Mammary epithelial cell (primary cell): ENCODE measurements at regions of chr1 and their contacts with region 1.

Region 1: GRCh38 chr1:228131766-228132165 is 8.3 kb upstream of the GUK1 start:
- DNase-seq: no peak
- H3K4me3 ChIP-seq: no peak overlapping the region
- H3K27ac ChIP-seq: peak overlapping the region; percentile 9
- H3K4me1 ChIP-seq: peaks cover 11% of the 10 kb centered on the region
- H3K27me3 ChIP-seq: no peaks in the 10 kb centered on the region
- CTCF ChIP-seq: no peak

Region 2: DNA sequence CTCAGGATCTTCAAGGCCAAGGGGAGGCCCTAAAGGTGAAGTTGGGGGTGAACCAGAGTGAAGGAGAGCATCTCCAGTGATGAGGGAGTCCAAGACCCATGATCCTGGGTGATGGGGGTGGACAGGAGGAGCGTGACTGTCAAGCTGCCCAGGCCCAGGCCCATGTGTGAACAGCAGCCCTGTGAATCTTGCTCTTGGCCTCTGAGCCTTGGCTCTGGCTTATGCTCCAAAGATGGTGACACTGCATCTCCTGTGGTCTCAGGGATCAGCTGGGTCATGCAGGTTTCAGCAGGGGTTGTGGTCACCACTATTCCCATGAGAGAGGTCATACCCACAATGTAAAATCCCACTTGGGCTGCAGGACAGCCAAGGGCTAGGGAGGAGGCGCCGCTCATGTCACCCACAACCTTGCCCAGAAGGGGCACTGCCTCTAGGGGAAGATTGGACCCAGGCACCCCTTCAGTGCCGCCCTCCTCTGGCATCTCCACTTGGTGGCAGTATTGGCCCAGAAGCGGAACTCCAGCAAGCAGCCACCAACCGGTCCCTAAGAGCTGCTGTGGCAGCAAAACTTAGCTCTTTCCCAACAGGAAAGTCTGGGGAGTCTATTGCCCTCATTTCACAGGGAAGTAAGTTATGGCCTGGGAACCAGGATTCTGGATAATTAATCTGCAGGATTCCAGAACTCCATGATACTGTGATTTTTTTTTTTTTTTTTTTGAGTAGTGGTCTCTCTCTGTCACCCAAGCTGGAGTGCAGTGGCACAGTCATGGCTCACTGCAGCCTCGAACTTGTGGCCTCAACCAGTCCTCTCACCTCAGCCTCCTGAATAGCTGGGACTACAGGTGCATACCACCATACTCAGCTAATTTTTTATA is 132.5 kb before region 1 on chr1:
- CTCF ChIA-PET with region 1: interaction called, 6 read pairs
- dilution Hi-C with region 1: no loop called
- in situ Hi-C with region 1: no loop called
- intact Hi-C with region 1: loop called (anchors 1 kb)
- DNase-seq: peak; percentile 68
- H3K4me3 ChIP-seq: no peak overlapping the region
- H3K27ac ChIP-seq: no peak overlapping the region
- H3K4me1 ChIP-seq: no peaks in the 10 kb centered on the region
- H3K27me3 ChIP-seq: no peaks in the 10 kb centered on the region
- CTCF ChIP-seq: peak; percentile 97 to 98

Region 3: DNA sequence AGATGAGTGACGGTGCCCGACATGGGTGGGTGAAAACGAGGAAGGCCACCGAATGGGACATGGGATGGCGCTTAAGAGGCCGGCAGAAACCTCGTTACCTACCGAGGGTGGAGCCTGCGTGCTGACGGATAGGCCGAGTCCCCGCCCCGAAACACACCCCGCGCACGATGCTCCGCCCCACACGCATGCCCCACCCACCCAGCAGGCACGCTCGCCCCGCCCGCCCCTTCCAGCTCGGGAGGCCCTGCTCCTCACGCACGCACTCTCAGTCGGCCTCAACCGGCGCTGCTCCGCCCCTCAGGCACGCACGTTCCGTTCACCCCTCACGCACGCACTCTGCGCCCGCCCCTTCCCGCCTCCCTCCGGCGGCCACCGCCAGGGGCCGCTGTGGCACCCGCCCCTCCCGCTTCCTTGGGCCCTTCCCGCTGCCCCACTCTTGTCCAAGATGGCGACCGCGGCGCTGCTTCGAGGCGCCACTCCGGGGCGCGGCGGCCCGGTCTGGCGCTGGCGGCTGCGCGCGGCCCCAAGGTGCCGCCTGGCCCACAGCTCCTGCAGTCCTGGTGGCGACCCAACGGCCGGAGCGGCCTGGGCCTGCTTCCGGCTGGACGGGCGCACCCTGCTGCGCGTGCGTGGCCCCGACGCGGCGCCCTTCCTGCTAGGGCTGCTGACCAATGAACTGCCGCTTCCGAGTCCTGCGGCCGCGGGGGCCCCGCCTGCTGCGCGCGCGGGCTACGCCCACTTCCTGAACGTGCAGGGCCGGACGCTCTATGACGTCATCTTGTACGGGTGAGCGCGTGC is 33.8 kb after region 1 on chr1 and contains the start of gene IBA57:
- CTCF ChIA-PET with region 1: interaction called, 3 read pairs
- dilution Hi-C with region 1: no loop called
- in situ Hi-C with region 1: no loop called
- intact Hi-C with region 1: loop called (anchors 1 kb)
- DNase-seq: peak; percentile 98
- H3K4me3 ChIP-seq: peak within 1 kb of the TSS; percentile 59 to 73 (median 68)
- H3K27ac ChIP-seq: peak within 1 kb of the TSS; percentile 94
- H3K4me1 ChIP-seq: peaks cover 38% of the 10 kb centered on the region
- H3K27me3 ChIP-seq: no peaks in the 10 kb centered on the region
- CTCF ChIP-seq: peak; percentile 72 to 87
- total RNA-seq, gene IBA57: 7.0 to 8.0 TPM

Region 4: GRCh38 chr1:228212966-228213844 is 81.4 kb after region 1 on chr1:
- CTCF ChIA-PET with region 1: no interaction called
- dilution Hi-C with region 1: loop called (anchors 5 kb)
- in situ Hi-C with region 1: no loop called
- intact Hi-C with region 1: loop called (anchors 5 kb)
- DNase-seq: peak; percentile 83
- H3K4me3 ChIP-seq: peak overlapping the region; percentile 32 to 80 (median 57)
- H3K27ac ChIP-seq: no peak overlapping the region
- H3K4me1 ChIP-seq: peaks cover 9% of the 10 kb centered on the region
- H3K27me3 ChIP-seq: no peaks in the 10 kb centered on the region
- CTCF ChIP-seq: peak; percentile 34 to 73

Region 5: GRCh38 chr1:228378090-228378872 is 246.5 kb after region 1 on chr1:
- CTCF ChIA-PET with region 1: no interaction called
- dilution Hi-C with region 1: no loop called
- in situ Hi-C with region 1: no loop called
- intact Hi-C with region 1: loop called (anchors 1 kb)
- DNase-seq: peak; percentile 42
- H3K4me3 ChIP-seq: peak overlapping the region; percentile 49 to 60 (median 59)
- H3K27ac ChIP-seq: no peak overlapping the region
- H3K4me1 ChIP-seq: peaks cover 16% of the 10 kb centered on the region
- H3K27me3 ChIP-seq: no peaks in the 10 kb centered on the region
- CTCF ChIP-seq: peak; percentile 31 to 51

Region 6: GRCh38 chr1:228405987-228406265 is 274.2 kb after region 1 on chr1:
- CTCF ChIA-PET with region 1: no interaction called
- dilution Hi-C with region 1: no loop called
- in situ Hi-C with region 1: no loop called
- intact Hi-C with region 1: loop called (anchors 5 kb)
- DNase-seq: no peak
- H3K4me3 ChIP-seq: peak overlapping the region; percentile 69 to 94 (median 76)
- H3K27ac ChIP-seq: peak overlapping the region; percentile 16
- H3K4me1 ChIP-seq: peaks cover 28% of the 10 kb centered on the region
- H3K27me3 ChIP-seq: no peaks in the 10 kb centered on the region
- CTCF ChIP-seq: no peak

Region 7: DNA sequence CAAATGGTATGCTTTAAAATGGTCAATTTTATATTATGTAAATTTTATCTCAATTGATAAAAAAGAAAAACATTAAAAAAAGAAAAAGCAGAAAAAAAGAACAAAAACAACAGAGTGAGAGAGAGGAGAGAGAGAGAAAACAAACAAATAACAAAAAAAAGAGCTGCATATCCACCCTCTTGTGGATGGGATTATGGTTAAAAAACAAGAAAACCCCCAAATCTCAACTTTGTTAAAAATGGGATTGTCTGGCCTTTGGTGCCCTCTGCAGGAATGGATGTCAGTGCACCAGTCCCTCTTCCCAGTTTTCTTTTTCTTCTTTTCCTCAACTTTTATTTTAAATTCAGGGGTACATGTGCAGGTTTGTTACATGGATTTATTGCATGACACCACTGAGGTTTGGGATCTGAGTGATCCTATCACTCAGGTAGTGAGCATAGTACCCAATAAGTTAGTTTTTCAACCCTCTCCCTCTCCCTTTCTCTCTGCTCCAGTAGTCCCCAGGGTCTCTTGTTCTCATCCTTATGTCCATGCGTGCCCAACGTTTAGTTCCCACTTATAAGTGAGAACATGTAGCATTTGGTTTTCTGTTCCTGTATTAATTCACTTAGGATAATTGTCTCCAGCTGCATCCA is 383.6 kb after region 1 on chr1:
- CTCF ChIA-PET with region 1: no interaction called
- dilution Hi-C with region 1: loop called (anchors 5 kb)
- in situ Hi-C with region 1: no loop called
- intact Hi-C with region 1: loop called (anchors 1 kb)
- DNase-seq: no peak
- H3K4me3 ChIP-seq: no peak overlapping the region
- H3K27ac ChIP-seq: no peak overlapping the region
- H3K4me1 ChIP-seq: no peaks in the 10 kb centered on the region
- H3K27me3 ChIP-seq: peaks cover 4% of the 10 kb centered on the region
- CTCF ChIP-seq: peak; percentile 54 to 67